Cardiac septum (tissue), 1 donor: ENCODE measurements at regions of chr1 and their contacts with region 1.

Region 1: DNA sequence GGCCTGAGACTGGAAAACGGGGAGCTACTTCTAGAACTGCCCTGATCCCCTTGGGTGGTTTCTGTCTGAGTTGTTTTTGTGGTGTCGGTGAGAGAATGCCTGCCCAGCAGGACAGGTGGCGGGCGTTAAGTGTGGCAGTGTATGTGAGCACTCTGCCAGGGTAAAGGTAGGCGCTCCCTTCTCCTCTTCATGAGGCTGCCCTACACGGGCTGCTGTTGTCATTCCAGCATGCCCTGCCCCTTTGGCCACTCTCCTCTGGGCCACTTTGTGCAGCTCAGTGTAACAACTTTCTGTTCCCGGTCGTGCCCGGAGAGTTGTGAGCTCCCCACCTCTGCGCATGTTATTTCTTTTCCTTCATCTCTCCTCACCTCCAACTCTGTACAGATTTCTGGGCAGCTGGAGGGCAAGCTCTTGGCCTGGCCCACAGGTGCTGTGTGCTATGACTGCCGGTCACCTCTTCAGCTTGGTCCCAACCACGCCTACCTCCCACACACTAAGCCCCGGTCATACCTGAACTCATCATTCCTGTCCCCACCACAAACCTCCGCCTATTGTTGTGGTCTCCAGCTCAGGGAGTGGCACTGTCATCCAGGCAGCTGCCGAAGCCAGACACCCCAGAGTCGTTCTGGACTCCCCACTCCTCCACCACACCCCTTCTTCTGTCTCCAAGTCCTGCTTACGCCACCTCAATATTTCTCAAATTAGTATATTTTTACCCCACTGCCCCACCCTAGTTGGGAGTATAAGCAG is 69.0 kb downstream of the GADD45A start:
- DNase-seq: no peak

Region 2: GRCh38 chr1:67646145-67647035 is 107.6 kb before region 1 on chr1:
- intact Hi-C with region 1: loop called (anchors 2 kb)
- DNase-seq: no peak

Region 3: DNA sequence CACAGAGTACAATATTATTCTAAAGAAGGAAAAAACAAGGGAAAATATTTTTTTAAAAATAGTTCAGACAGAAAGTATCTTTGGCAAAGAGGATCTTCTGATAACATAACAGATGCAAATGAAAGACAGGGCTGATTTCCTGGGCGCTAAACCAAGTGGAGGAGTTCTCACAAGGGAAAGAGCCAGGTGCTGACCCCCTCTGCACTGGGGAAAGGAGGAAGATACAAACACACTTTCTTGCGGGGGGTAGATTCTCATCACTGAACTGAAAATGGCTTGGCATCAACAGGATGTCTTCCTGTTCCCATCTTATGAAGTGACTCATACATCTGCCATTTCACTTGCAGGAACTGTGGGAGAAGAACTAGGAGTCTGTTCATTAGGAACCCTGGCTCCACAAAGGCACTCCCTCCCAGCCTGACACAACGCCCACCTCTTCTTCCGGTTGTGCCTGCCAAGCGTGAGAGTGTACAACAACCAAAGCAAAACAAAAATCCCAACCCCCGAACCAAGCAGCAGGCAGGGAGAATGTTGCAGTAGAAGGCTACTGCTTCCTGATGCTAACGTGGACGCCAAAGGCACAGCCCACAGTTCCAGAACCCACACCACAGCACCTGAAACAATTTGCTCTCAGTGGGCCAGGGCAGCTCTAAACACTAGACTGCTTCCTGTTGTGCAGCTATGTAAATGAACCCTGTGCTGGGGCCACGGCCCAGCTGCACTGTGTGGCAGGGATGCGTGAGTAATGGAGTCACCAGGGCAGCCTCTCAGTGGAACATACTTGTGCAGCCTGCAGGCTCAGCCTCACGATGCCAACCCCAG is 17.9 kb before region 1 on chr1:
- intact Hi-C with region 1: no loop called
- DNase-seq: peak; percentile 85

Region 4: DNA sequence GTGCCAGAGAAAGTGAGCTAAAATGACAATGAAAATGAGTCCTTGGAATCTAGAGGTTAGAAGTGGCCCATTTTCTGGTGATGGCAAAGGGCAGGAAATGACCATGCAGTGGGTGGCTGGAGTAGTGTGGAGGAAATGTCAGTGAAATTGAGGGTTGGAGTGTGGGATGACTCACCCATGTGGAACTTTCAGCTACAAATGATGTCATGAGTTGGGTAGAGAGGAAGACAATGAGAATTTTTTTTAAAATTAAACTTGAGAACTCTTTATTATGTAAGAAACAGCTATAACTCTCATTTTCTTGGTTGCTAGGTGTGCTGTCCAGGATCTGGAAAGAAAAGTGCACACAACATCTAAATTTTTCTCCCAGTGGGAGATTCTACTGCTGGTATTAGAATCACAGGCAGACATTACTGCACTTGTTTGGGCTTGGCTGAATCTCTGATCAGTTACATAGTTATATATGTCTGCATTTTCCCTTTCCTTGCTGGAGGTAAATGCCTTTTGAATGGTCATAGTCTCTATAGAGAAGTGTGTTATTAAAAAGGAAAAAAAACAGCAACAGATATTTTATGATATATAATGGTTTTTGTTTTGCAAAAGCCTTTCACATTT is 136.1 kb after region 1 on chr1:
- intact Hi-C with region 1: no loop called
- DNase-seq: no peak